Activated T-helper 1 cell treated with anti-CD3 and anti-CD28 coated beads, Interleukin-12 subunit alpha, Interleukin-12 subunit beta, Interleukin-2, Interleukin-4 antibody, amounts not matched to agents 30 ng/mL and 10 ng/mL and 1 ng/mL, durations not matched to agents 14 hours and 24 hours and 36 hours (primary cell): ENCODE measurements at regions of chr10 and their contacts with region 1.

Region 1: DNA sequence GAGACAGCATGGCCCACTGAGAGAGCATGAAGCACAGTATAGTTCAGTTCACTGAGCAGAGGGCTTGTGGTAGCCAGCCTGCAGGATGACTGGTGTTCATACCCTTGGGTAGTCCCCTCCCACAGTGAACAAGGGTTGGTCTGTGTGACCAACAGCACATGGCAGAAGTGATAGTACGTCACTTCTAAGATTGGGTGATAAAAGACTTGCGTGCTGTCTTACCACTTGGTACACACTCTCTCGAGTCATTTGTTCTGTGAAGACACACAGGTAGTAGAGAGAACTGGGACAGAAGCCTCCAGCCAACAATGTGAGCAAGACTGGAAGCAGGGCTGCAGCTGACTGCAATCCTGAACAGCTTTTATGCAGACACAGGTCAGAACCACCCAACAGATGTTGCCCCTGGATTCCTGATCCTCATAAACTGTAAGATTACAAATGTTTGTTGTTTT is 14.6 kb downstream of the EPC1 start:
- DNase-seq: peak; percentile 71
- H3K4me3 Mint-ChIP-seq: peak overlapping the region; percentile 80
- H3K27ac Mint-ChIP-seq: peak overlapping the region; percentile 97
- H3K4me1 Mint-ChIP-seq: peaks cover 93% of the 10 kb centered on the region
- H3K27me3 Mint-ChIP-seq: no peaks in the 10 kb centered on the region

Region 2: GRCh38 chr10:32149252-32149955 is 182.9 kb before region 1 on chr10:
- intact Hi-C with region 1: loop called (anchors 5 kb)
- DNase-seq: peak; percentile 36
- H3K4me3 Mint-ChIP-seq: peak overlapping the region; percentile 45
- H3K27ac Mint-ChIP-seq: peak overlapping the region; percentile 94
- H3K4me1 Mint-ChIP-seq: peaks cover 41% of the 10 kb centered on the region
- H3K27me3 Mint-ChIP-seq: no peaks in the 10 kb centered on the region

Region 3: DNA sequence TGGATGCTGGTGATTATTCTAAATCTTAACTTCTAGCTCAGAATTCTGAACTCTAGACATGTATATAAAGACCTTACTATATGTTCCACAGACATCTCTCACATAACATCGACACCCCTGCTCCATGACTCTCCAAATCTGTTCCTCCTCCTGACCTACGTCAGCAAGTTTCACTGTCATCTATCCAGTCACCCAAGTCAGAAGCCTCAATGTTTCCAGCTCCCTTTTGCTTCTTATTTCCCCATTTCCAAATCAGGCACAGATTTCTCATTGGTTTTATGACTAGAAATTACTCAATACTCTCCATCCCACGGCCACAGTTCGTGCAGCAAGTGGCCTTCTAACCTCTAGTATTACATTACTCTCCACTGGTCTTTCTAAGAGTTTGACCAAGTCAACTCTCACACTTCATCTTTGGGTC is 13.8 kb before region 1 on chr10:
- intact Hi-C with region 1: loop called (anchors 1 kb)
- DNase-seq: no peak
- H3K4me3 Mint-ChIP-seq: peak overlapping the region; percentile 5
- H3K27ac Mint-ChIP-seq: peak overlapping the region; percentile 69
- H3K4me1 Mint-ChIP-seq: peaks cover 57% of the 10 kb centered on the region
- H3K27me3 Mint-ChIP-seq: no peaks in the 10 kb centered on the region

Region 4: GRCh38 chr10:32985781-32986350 is 653.5 kb after region 1 on chr10:
- intact Hi-C with region 1: no loop called
- DNase-seq: no peak
- H3K4me3 Mint-ChIP-seq: no peak overlapping the region
- H3K27ac Mint-ChIP-seq: no peak overlapping the region
- H3K4me1 Mint-ChIP-seq: peaks cover 19% of the 10 kb centered on the region
- H3K27me3 Mint-ChIP-seq: peaks cover 2% of the 10 kb centered on the region